ENCODE measurements at regions of chr11 and their contacts with region 1.

Region 1: DNA sequence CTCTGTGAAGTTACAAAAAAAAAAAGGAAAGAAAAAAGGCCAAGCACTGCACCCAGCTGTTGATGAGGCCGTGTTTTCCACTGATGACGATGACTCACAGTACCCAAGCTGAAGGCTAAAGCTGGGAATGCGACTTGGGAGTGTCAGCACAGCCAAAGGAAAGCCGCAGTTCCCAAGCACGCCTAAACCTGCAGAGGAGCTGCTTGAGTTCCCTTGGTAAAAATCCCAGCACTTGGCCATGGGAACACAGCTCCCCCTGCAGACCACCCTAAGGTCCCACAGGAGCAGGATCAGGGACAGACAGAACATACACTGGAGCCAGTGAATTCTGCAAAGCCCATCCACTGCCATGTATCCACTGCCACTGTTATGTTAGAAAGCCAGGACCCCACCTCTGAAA is 39.9 kb downstream of the SERGEF start:
- DNase-seq: peak; percentile 77 to 83
- H3K4me3 ChIP-seq: no peak overlapping the region
- H3K27ac ChIP-seq: no peak overlapping the region
- H3K4me1 ChIP-seq: no peaks in the 10 kb centered on the region
- H3K27me3 ChIP-seq: no peaks in the 10 kb centered on the region
- CTCF ChIP-seq: peak; percentile 91 to 98 (median 97)
- EP300 ChIP-seq: no peak
- POLR2A ChIP-seq: no peak
- RAD21 ChIP-seq: peak; percentile 91 to 93

Region 2: GRCh38 chr11:17770048-17770652 is 202.8 kb before region 1 on chr11:
- CTCF ChIA-PET with region 1: interaction called, 11 read pairs
- POLR2A ChIA-PET with region 1: no interaction called
- DNase-seq: no peak
- H3K4me3 ChIP-seq: no peak overlapping the region
- H3K27ac ChIP-seq: no peak overlapping the region
- H3K4me1 ChIP-seq: peaks cover 0 to 4% (median 0%) of the 10 kb centered on the region in 4 experiments; a peak in 2 of 7 replicates
- H3K27me3 ChIP-seq: no peaks in the 10 kb centered on the region
- CTCF ChIP-seq: peak; percentile 34 to 44 (median 43)
- EP300 ChIP-seq: no peak
- POLR2A ChIP-seq: no peak
- RAD21 ChIP-seq: peak; percentile 10 to 25; a peak in 1 of 4 replicates

Region 3: GRCh38 chr11:17906436-17906835 is 66.6 kb before region 1 on chr11:
- CTCF ChIA-PET with region 1: interaction called, 13 read pairs
- POLR2A ChIA-PET with region 1: no interaction called
- DNase-seq: peak; percentile 70 to 73
- H3K4me3 ChIP-seq: peak overlapping the region in 1 of 4 experiments; percentile 20; a peak in 1 of 8 replicates
- H3K27ac ChIP-seq: no peak overlapping the region
- H3K4me1 ChIP-seq: peaks cover 4 to 10% (median 6%) of the 10 kb centered on the region in 4 experiments; a peak in 6 of 7 replicates
- H3K27me3 ChIP-seq: no peaks in the 10 kb centered on the region
- CTCF ChIP-seq: peak; percentile 62 to 86 (median 67)
- EP300 ChIP-seq: no peak
- POLR2A ChIP-seq: no peak
- RAD21 ChIP-seq: peak; percentile 74 to 79

Region 4: DNA sequence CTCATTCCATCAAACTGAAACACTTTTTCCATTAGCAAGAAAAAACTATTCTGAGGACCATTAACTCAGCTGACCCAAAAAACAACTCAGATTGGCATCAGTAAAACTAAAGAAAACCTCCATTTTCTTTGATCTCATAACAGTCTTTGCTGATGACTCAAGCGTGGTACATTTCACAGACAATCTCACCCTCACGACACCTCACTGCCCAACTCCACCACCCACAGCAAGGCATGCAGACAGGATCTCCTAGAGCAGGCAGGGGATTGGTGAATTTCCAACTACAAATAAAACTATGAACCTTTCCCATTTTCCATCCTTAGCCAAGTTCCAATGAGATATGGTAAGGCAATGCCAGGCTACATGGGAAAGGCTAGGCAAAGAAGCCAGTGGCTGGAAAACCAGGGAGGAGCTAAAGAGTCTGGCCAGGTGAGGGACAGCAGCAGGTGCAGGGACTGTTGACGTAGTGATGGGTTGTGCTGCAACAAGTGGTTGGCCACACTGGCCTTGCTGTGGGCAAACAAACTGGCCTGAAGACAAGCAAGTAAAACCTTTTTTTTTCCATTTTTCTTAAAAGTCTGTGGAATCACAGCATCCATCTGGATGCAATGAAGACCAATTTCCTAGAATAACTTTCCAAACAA is 57.4 kb before region 1 on chr11:
- CTCF ChIA-PET with region 1: interaction called, 11 read pairs
- POLR2A ChIA-PET with region 1: no interaction called
- DNase-seq: no peak
- H3K4me3 ChIP-seq: no peak overlapping the region
- H3K27ac ChIP-seq: no peak overlapping the region
- H3K4me1 ChIP-seq: peaks cover 5 to 15% (median 8%) of the 10 kb centered on the region in 4 experiments; a peak in 5 of 7 replicates
- H3K27me3 ChIP-seq: no peaks in the 10 kb centered on the region
- CTCF ChIP-seq: no peak
- EP300 ChIP-seq: no peak
- POLR2A ChIP-seq: no peak
- RAD21 ChIP-seq: no peak

Region 5: GRCh38 chr11:17927681-17928347 is 45.2 kb before region 1 on chr11:
- CTCF ChIA-PET with region 1: interaction called, 18 read pairs
- POLR2A ChIA-PET with region 1: no interaction called
- DNase-seq: no peak
- H3K4me3 ChIP-seq: no peak overlapping the region
- H3K27ac ChIP-seq: no peak overlapping the region
- H3K4me1 ChIP-seq: peaks cover 0 to 8% (median 2%) of the 10 kb centered on the region in 4 experiments; a peak in 2 of 7 replicates
- H3K27me3 ChIP-seq: no peaks in the 10 kb centered on the region
- CTCF ChIP-seq: no peak
- EP300 ChIP-seq: no peak
- POLR2A ChIP-seq: no peak
- RAD21 ChIP-seq: no peak

Region 6: GRCh38 chr11:17948296-17948695 is 24.7 kb before region 1 on chr11:
- CTCF ChIA-PET with region 1: interaction called, 13 read pairs
- POLR2A ChIA-PET with region 1: no interaction called
- DNase-seq: no peak
- H3K4me3 ChIP-seq: no peak overlapping the region
- H3K27ac ChIP-seq: no peak overlapping the region
- H3K4me1 ChIP-seq: no peaks in the 10 kb centered on the region
- H3K27me3 ChIP-seq: no peaks in the 10 kb centered on the region
- CTCF ChIP-seq: no peak
- EP300 ChIP-seq: no peak
- POLR2A ChIP-seq: no peak
- RAD21 ChIP-seq: no peak